ENCODE measurements at regions of chr5 and their contacts with region 1.

Region 1: DNA sequence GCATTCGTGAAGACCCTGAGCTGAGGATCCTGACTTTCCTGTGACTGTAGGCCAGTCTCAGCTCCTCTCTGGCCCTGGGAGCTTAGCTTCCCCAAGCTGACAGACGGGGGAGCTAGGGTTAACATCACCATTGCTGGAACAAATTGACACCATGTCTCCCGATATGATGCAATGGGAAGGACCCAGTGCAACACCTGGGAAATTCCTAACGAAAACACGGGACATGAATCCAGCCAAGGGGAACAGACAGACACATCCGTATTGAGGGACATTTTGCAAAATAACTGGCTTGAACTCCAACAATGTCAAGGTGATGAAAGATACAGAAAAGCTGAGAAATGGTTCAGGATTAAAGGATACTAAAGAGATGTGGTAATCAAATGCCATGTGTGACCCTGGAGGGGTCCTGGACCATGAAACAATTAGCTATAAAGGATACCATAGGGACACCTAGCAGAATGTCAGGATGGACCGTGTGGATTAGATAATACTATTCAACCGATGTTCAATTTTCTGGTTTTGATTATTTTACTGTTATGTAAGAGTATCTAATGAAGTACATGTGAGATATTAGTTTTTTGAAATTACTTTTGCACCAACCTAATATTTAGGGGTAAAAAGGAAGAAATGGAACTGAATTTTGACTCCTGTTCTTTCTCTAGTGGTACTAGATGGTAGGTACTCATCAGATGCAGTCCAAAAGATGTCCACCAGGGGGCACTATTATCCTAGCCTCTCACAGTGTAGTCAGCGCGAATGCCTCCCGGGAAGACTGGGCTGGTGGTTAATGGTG is 52.7 kb downstream of the NDST1 start:
- DNase-seq: peak; percentile 81 to 89
- ATAC-seq: peak; percentile 87

Region 2: GRCh38 chr5:149596713-149597112 is 963.9 kb before region 1 on chr5:
- intact Hi-C with region 1: no loop called
- DNase-seq: no peak
- ATAC-seq: peak; percentile 68

Region 3: GRCh38 chr5:150656191-150657132 is 95.9 kb after region 1 on chr5:
- intact Hi-C with region 1: loop called (anchors 5 kb)
- DNase-seq: peak; percentile 47 to 78
- ATAC-seq: peak; percentile 75

Measured in left colon (tissue), 2 donors.